GM12878 (cell line): ENCODE measurements at regions of chr2 and their contacts with region 1.

Region 1: GRCh38 chr2:231297108-231297908 is 98.2 kb upstream of the B3GNT7 start:
- DNase-seq: peak; percentile 36
- ATAC-seq: peak; percentile 81
- H3K4me3 ChIP-seq: no peak overlapping the region
- H3K27ac ChIP-seq: no peak overlapping the region
- H3K4me1 ChIP-seq: peaks cover 40% of the 10 kb centered on the region
- H3K27me3 ChIP-seq: no peaks in the 10 kb centered on the region
- CTCF ChIP-seq: peak; percentile 73 to 90 (median 81)
- EP300 ChIP-seq: no peak
- POLR2A ChIP-seq: no peak
- RAD21 ChIP-seq: peak; percentile 59

Region 2: DNA sequence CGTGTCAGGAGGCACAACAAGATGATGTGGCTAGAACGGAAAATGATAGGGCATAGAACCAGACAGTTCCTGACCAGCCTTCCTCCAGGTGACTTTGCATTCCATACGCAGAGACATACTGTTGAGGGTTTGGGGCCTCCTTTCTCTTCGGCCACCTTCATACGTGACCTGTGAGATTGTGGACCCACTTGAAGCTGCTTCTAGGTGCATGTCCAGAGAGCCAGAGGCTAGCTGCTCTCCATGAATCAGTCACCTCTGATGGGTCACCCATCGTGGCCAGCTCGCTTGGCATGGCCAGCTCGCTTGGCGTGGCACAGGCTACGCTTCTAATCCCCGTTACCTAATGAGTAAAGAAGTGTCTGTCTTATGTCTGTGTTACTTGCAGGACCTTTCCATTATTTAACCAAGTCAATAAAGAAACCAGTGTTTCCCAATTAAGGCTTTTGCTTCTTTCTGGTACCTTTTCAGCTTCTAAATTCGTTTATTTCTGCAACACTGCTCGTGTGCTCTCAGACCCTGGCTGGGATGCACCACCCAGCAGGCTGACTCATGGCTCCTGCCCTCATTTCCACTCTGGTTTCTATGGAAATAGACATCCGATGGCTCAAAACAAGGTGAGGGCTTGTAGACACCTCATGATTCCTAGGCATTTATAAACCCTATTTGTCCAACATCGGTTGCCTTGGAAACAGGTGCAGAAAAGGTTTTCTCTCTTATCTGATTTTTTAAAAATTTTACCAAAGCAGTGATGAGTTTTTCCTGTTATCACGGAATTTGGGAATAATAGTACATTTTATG is 11.5 kb after region 1 on chr2:
- CTCF ChIA-PET with region 1: interaction called, 12 read pairs
- POLR2A ChIA-PET with region 1: no interaction called
- RAD21 ChIA-PET with region 1: no interaction called
- SMC1A ChIA-PET with region 1: interaction called, 8 read pairs
- in situ Hi-C with region 1: no loop called
- intact Hi-C with region 1: no loop called
- DNase-seq: no peak
- ATAC-seq: no peak
- H3K4me3 ChIP-seq: no peak overlapping the region
- H3K27ac ChIP-seq: no peak overlapping the region
- H3K4me1 ChIP-seq: peaks cover 7% of the 10 kb centered on the region
- H3K27me3 ChIP-seq: no peaks in the 10 kb centered on the region
- CTCF ChIP-seq: no peak
- EP300 ChIP-seq: no peak
- POLR2A ChIP-seq: no peak
- RAD21 ChIP-seq: no peak

Region 3: DNA sequence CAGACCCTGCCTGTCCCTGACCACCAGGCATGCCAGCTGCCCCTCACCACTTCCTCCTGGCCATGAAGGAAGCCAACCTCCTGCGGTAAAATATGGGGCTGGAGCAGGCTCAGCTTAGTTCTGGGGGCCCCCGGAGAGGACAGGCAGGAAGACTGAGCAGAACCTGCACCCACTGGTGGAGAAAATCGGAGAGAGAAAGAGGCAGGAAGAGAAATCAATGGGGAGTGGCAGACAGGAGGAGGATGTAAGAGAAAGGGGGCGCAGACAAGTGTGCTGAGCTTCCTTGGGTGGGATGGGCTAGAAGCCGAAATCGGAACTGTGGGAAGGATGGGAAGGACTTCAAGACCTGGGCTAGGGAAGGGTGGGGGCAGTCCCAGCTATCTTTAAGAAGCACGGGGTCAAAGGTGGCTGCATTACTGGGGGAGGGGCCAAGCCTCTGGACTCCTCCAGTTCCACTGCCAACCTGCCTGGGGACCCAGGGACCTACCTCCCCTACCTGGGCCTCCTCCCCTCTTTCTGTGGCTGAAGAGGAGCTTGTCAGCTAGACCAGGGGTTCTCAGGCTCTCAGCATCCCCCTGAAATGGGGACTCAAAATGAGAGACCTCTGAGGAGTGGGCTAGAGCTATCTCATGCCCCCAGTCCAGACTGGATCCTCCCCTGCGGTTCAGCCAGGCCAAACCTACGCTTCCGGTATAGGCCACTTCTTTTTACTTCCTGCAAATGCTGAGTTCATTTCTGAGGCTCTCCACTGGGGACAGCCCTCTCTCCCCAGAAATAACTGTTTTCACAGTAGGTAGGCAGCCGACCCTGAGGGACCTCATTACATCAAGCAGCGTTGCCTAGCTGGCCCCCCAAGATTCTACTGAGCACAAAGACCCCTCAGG is 64.6 kb after region 1 on chr2:
- CTCF ChIA-PET with region 1: interaction called, 10 read pairs
- POLR2A ChIA-PET with region 1: no interaction called
- RAD21 ChIA-PET with region 1: interaction called, 5 read pairs
- SMC1A ChIA-PET with region 1: interaction called, 3 read pairs
- in situ Hi-C with region 1: no loop called
- intact Hi-C with region 1: no loop called
- DNase-seq: peak; percentile 26
- ATAC-seq: peak; percentile 98
- H3K4me3 ChIP-seq: no peak overlapping the region
- H3K27ac ChIP-seq: peak overlapping the region; percentile 78
- H3K4me1 ChIP-seq: peaks cover 15% of the 10 kb centered on the region
- H3K27me3 ChIP-seq: no peaks in the 10 kb centered on the region
- CTCF ChIP-seq: peak; percentile 19 to 46 (median 38); a peak in 5 of 6 replicates
- EP300 ChIP-seq: no peak
- POLR2A ChIP-seq: peak; percentile 35; the same call in 1 of the 2 replicates
- RAD21 ChIP-seq: 0 out of 2 replicates have a peak, but pooled peaks have one; percentile 27

Region 4: GRCh38 chr2:231394211-231395141 is 97.2 kb after region 1 on chr2:
- CTCF ChIA-PET with region 1: interaction called, 73 read pairs
- POLR2A ChIA-PET with region 1: interaction called, 11 read pairs
- RAD21 ChIA-PET with region 1: interaction called, 15 read pairs
- SMC1A ChIA-PET with region 1: interaction called, 43 read pairs
- in situ Hi-C with region 1: loop called (anchors 5 kb)
- intact Hi-C with region 1: loop called (anchors 1 kb)
- DNase-seq: peak; percentile 87
- ATAC-seq: peak; percentile 66
- H3K4me3 ChIP-seq: peak overlapping the region; percentile 65
- H3K27ac ChIP-seq: peak overlapping the region; percentile 95
- H3K4me1 ChIP-seq: peaks cover 58% of the 10 kb centered on the region
- H3K27me3 ChIP-seq: no peaks in the 10 kb centered on the region
- CTCF ChIP-seq: peak; percentile 52 to 67 (median 61)
- EP300 ChIP-seq: peak in 1 of 2 experiments; percentile 53; a peak in 1 of 4 replicates
- POLR2A ChIP-seq: peak; percentile 76
- RAD21 ChIP-seq: peak; percentile 47

Region 5: GRCh38 chr2:231452799-231453508 is 155.6 kb after region 1 on chr2:
- CTCF ChIA-PET with region 1: interaction called, 14 read pairs
- POLR2A ChIA-PET with region 1: no interaction called
- RAD21 ChIA-PET with region 1: interaction called, 3 read pairs
- SMC1A ChIA-PET with region 1: interaction called, 8 read pairs
- in situ Hi-C with region 1: no loop called
- intact Hi-C with region 1: no loop called
- DNase-seq: no peak
- ATAC-seq: peak; percentile 13
- H3K4me3 ChIP-seq: no peak overlapping the region
- H3K27ac ChIP-seq: no peak overlapping the region
- H3K4me1 ChIP-seq: no peaks in the 10 kb centered on the region
- H3K27me3 ChIP-seq: no peaks in the 10 kb centered on the region
- CTCF ChIP-seq: no peak
- EP300 ChIP-seq: no peak
- POLR2A ChIP-seq: peak; percentile 65
- RAD21 ChIP-seq: no peak